Dendritic cell treated with granulocyte-macrophage colony-stimulating factor and Interleukin-4, amounts not matched to agents 40 ng/mL and 50 ng/mL, for 4 days (primary cell): ENCODE measurements at regions of chr6 and their contacts with region 1.

Region 1: GRCh38 chr6:188821-189655 is 103.2 kb upstream of the DUSP22 start:
- H3K4me3 Mint-ChIP-seq: no peak overlapping the region
- H3K27ac Mint-ChIP-seq: no peak overlapping the region
- H3K4me1 Mint-ChIP-seq: peaks cover 64% of the 10 kb centered on the region
- H3K27me3 Mint-ChIP-seq: peaks cover 4% of the 10 kb centered on the region

Region 2: DNA sequence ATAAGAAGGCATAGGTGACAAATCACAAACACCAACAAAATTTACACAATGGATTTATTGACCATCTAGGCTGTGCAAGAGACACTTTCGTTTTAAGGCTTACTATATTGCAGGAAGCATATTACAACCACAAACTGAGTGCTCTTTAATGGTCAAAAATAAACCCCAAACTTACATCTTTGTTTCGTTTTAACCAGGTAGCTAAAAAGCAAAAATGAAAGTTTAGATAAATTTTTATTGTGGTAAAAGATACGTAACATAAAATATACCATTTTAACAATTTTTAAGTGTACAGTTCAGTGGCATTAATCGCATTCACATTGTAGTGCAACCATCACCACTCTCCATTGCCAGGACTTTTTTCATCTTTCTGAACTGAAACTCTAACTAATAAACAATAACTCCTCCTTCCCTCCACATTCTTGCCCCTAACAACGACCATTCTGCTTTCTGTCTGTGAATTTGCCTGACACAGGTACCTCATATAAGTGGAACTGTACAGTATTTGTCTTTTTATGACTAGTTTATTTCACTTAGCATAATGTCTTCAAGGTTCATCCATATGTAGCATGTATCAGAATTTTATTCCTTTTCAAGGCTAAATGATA is 71.0 kb after region 1 on chr6:
- intact Hi-C with region 1: loop called (anchors 5 kb)
- H3K4me3 Mint-ChIP-seq: no peak overlapping the region
- H3K27ac Mint-ChIP-seq: no peak overlapping the region
- H3K4me1 Mint-ChIP-seq: peaks cover 40% of the 10 kb centered on the region
- H3K27me3 Mint-ChIP-seq: no peaks in the 10 kb centered on the region

Region 3: GRCh38 chr6:286681-287488 is 97.8 kb after region 1 on chr6:
- intact Hi-C with region 1: no loop called
- H3K4me3 Mint-ChIP-seq: no peak overlapping the region
- H3K27ac Mint-ChIP-seq: no peak overlapping the region
- H3K4me1 Mint-ChIP-seq: peaks cover 46% of the 10 kb centered on the region
- H3K27me3 Mint-ChIP-seq: peaks cover 7% of the 10 kb centered on the region

Region 4: GRCh38 chr6:408599-409102 is 219.6 kb after region 1 on chr6:
- intact Hi-C with region 1: loop called (anchors 2 kb)
- H3K4me3 Mint-ChIP-seq: peak overlapping the region; percentile 20
- H3K27ac Mint-ChIP-seq: peak overlapping the region; percentile 86
- H3K4me1 Mint-ChIP-seq: peaks cover 49% of the 10 kb centered on the region
- H3K27me3 Mint-ChIP-seq: no peaks in the 10 kb centered on the region

Region 5: GRCh38 chr6:786946-787763 is 598.1 kb after region 1 on chr6:
- intact Hi-C with region 1: loop called (anchors 5 kb)
- H3K4me3 Mint-ChIP-seq: no peak overlapping the region
- H3K27ac Mint-ChIP-seq: no peak overlapping the region
- H3K4me1 Mint-ChIP-seq: peaks cover 5% of the 10 kb centered on the region
- H3K27me3 Mint-ChIP-seq: peaks cover 17% of the 10 kb centered on the region